Calu3 (cell line): ENCODE measurements at regions of chr19 and their contacts with region 1.

Region 1: DNA sequence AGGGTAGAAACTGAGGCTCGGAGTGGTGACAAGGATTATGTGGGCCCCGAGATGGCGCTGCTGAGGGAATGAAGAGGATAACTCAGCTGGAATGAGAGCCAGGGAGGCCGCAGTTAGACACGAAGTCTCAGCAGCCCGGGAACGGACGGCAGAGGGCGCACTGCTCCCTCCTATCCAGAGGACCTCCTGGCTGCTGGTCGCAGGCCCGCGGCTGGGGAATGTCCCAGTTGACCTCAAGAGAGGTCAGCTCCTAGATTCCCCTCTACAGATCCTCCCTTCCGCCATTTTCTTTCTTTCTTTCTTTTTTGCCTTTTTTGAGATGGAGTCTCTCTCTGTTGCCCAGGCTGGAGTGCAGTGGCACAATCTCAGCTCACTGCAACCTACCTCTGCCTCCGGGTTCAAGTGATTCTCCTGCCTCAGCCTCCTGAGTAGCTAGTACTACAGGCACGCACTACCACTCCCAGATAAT is 24.1 kb upstream of the ASPDH start:
- DNase-seq: peak; percentile 92
- H3K4me3 Mint-ChIP-seq: no peak overlapping the region
- H3K27ac Mint-ChIP-seq: no peak overlapping the region
- H3K4me1 Mint-ChIP-seq: no peaks in the 10 kb centered on the region
- H3K27me3 Mint-ChIP-seq: peaks cover 31% of the 10 kb centered on the region
- CTCF ChIP-seq: peak; percentile 80

Region 2: GRCh38 chr19:50368649-50369570 is 168.9 kb before region 1 on chr19:
- CTCF ChIA-PET with region 1: interaction called, 3 read pairs
- intact Hi-C with region 1: loop called (anchors 5 kb)
- DNase-seq: peak; percentile 89
- H3K4me3 Mint-ChIP-seq: peak overlapping the region; percentile 93
- H3K27ac Mint-ChIP-seq: peak overlapping the region; percentile 55
- H3K4me1 Mint-ChIP-seq: peaks cover 13% of the 10 kb centered on the region
- H3K27me3 Mint-ChIP-seq: no peaks in the 10 kb centered on the region
- CTCF ChIP-seq: peak; percentile 87

Region 3: GRCh38 chr19:50418176-50419021 is 119.4 kb before region 1 on chr19 and contains the start of gene SPIB:
- CTCF ChIA-PET with region 1: no interaction called
- intact Hi-C with region 1: no loop called
- DNase-seq: no peak
- H3K4me3 Mint-ChIP-seq: no peak within 1 kb of the TSS
- H3K27ac Mint-ChIP-seq: no peak within 1 kb of the TSS
- H3K4me1 Mint-ChIP-seq: no peaks in the 10 kb centered on the region
- H3K27me3 Mint-ChIP-seq: peaks cover 14% of the 10 kb centered on the region
- CTCF ChIP-seq: no peak
- total RNA-seq, gene SPIB: 1.2 and 1.3 TPM in 2 replicates

Region 4: DNA sequence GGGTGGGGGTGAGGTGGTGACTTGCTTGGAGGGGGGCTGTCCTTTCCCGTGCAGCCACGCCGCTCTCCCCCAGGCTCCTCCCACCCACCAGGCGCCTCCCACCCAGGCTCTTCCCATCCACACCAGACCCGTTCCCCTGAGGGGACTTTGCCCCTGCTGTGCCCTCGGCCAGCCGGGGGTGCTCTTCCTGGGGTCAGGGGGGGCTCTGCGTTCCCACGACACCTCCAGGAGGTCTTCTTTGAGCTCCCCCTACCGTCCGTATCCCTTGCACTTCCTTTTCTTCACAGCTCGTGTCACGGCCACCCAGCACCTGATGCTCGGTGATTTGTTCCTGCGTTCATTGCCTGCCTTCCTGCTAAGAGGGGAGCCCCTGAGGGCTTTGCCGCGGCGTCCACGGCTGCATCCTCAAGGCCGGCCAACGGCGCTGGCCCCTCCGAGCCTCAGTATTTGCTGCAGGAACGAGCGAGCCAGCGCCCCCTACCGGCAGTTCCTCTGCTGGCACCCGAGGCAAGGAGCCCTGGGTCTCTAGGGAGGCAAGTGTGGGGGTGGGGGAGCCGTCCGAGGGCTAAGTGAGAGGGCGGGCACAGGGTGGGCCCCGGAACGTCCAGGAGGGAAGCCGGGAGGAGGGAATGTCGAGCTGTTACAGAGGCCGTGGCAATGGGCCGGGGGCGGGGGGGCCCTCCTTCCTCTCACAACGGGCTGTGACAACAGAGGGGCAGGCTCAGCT is 18.6 kb after region 1 on chr19:
- CTCF ChIA-PET with region 1: interaction called, 22 read pairs
- intact Hi-C with region 1: no loop called
- DNase-seq: peak; percentile 92
- H3K4me3 Mint-ChIP-seq: peak overlapping the region; percentile 67
- H3K27ac Mint-ChIP-seq: no peak overlapping the region
- H3K4me1 Mint-ChIP-seq: peaks cover 8% of the 10 kb centered on the region
- H3K27me3 Mint-ChIP-seq: peaks cover 88% of the 10 kb centered on the region
- CTCF ChIP-seq: peak; percentile 96

Region 5: DNA sequence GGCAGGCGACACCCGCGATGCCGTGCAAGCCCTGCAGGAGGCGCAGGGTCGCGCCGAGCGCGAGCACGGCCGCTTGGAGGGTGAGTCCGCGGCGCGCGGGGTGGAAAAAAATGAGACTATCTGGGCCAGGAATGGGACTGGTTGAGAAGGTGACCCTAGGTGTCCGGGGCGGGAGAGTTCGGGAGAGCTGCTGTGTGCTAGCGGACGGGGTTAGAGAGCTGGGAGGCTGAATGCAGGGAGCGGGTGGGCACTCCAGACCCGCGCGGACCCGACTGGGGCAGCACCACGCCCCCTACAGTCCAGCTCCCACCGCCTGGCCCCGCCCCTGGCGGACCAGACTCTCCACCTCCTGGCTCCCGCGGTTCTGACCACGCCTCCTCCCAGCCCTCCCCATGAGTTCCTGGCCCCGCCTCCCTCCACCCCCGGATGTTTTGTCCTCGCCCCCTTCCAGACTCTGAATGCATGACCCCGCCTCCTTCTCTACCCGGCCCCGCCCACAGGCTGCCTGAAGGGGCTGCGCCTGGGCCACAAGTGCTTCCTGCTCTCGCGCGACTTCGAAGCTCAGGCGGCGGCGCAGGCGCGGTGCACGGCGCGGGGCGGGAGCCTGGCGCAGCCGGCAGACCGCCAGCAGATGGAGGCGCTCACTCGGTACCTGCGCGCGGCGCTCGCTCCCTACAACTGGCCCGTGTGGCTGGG is 186.9 kb after region 1 on chr19:
- CTCF ChIA-PET with region 1: interaction called, 13 read pairs
- intact Hi-C with region 1: no loop called
- DNase-seq: peak; percentile 100
- H3K4me3 Mint-ChIP-seq: peak overlapping the region; percentile 94
- H3K27ac Mint-ChIP-seq: peak overlapping the region; percentile 78
- H3K4me1 Mint-ChIP-seq: no peaks in the 10 kb centered on the region
- H3K27me3 Mint-ChIP-seq: peaks cover 63% of the 10 kb centered on the region
- CTCF ChIP-seq: peak; percentile 88

Region 6: GRCh38 chr19:50777754-50778303 is 240.0 kb after region 1 on chr19:
- CTCF ChIA-PET with region 1: interaction called, 4 read pairs
- intact Hi-C with region 1: loop called (anchors 2 kb)
- DNase-seq: no peak
- H3K4me3 Mint-ChIP-seq: no peak overlapping the region
- H3K27ac Mint-ChIP-seq: no peak overlapping the region
- H3K4me1 Mint-ChIP-seq: peaks cover 19% of the 10 kb centered on the region
- H3K27me3 Mint-ChIP-seq: peaks cover 99% of the 10 kb centered on the region
- CTCF ChIP-seq: no peak

Region 7: DNA sequence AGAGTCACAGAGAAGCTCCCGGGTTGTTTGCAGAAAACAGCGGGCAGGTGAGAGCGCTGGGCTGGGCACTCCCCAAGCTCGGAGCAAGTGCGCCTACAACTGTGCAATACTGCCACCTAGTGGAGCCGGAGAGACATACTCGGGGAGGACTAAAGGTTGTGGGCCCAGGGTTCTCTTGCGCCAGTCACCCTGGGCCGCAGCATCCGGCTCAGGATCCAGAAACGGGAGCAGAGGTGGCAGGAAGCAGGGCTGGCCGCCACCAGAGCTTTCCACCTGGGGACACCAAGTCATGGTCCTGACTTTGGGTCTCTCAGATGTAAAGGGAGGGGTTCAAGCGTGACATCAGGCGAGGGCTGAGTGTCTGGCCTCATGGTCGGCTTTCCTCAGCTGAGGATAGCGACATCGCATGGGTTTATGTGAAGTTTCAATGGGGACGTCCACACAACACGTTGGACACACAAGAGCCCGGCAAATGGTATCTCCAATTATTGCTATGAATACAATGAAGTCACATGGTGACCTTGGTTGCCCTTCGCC is 384.6 kb after region 1 on chr19:
- CTCF ChIA-PET with region 1: interaction called, 6 read pairs
- intact Hi-C with region 1: loop called (anchors 1 kb)
- DNase-seq: peak; percentile 91
- H3K4me3 Mint-ChIP-seq: no peak overlapping the region
- H3K27ac Mint-ChIP-seq: peak overlapping the region; percentile 10
- H3K4me1 Mint-ChIP-seq: peaks cover 21% of the 10 kb centered on the region
- H3K27me3 Mint-ChIP-seq: peaks cover 28% of the 10 kb centered on the region
- CTCF ChIP-seq: peak; percentile 94